ENCODE measurements at regions of chr18 and their contacts with region 1.

Region 1: DNA sequence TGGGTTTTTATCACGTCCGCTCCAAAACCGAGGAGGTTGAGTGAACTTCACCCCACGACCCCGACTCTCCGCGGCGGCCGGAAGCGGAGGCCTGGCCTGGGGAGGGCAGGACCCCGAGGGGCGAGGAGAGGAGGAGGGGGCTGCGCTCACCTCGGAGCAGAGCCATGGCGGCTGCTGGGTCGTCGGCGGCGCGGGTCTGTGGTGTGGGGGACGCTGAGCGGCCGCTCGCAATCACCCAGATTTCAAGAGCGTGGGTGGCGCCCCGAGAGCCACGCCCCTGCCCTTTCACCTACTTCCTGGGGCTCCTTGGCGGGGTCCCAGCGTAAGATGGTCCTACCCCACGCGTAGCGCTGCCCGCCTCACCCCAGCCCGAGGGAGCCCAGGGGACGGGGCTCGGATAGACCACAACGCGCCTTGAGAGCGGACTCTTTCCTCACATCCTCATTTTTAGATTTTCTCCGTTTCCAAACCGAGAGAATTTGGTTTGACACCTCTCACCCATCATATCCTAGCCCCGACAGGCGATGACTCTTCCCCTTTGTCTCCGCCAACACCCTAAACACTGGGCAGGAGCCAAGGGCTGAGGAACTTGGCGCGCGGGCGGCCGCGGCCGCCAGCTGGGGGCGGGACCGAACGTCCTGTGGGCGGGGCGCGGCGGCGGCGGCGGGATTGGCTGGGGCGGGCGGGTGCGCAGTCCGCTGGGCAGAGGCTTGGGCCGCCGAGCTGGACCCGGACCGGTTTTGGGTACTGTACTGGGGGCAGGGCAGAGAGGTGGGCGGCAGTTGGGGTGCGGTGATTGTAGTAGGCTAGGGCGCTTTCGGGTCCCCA is at the start of gene ACAA2:
- DNase-seq: peak in 1 of 2 experiments; percentile 90
- H3K4me3 ChIP-seq: peak within 1 kb of the TSS; percentile 74 to 93 (median 87)
- H3K27ac ChIP-seq: peak within 1 kb of the TSS; percentile 94
- H3K4me1 ChIP-seq: peaks cover 2 to 11% (median 8%) of the 10 kb centered on the region in 4 experiments; a peak in 5 of 7 replicates
- H3K27me3 ChIP-seq: no peaks in the 10 kb centered on the region; a peak in 1 of 7 replicates
- CTCF ChIP-seq: no peak
- EP300 ChIP-seq: no peak
- POLR2A ChIP-seq: peak; percentile 75 to 77
- RAD21 ChIP-seq: no peak
- total RNA-seq, gene ACAA2: 151 and 152 TPM in 2 replicates

Region 2: DNA sequence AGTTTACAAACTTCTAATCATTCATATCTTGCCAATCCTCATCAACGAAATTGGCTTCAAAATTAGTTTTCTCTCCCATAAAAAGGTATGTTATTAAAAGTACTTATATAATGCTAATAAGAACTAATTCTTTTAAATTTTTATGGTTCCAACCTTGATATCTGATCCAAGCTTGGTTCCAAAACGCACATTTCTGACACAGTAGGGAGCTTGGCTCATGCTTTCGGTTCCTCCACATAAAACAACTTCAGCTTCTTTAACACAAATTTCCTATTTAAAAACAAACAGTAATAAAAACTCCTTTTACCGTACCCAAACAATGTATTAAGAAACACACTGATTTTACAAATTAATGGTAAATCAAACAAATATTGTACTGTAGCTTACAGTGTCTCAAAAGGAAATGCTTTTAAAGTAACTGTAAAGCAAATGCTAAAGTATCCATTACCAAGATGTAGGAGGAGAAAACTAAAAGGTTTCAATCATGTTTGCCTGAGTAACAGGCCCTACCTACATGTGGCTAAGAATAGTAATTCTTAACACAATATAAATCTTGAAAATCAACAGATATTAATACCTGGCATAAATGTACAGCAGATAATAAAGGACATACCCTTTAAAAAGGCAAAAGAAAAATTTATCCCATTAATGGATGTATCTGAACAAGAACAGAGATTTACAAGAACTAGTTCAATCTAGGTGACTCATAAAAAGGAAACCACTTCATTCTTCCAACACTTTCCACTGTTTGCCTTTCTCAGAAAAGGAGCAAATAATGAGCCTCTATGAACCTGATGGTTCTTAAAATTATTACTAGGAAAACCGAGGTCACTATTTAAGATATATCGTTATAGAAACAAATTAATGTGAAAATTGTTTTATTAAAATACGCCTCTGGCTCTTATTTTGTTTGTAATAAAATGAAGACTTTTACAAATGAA is 17.7 kb before region 1 on chr18:
- CTCF ChIA-PET with region 1: no interaction called
- POLR2A ChIA-PET with region 1: interaction called, 10 read pairs
- DNase-seq: no peak
- H3K4me3 ChIP-seq: no peak overlapping the region
- H3K27ac ChIP-seq: no peak overlapping the region
- H3K4me1 ChIP-seq: no peaks in the 10 kb centered on the region
- H3K27me3 ChIP-seq: no peaks in the 10 kb centered on the region
- CTCF ChIP-seq: no peak
- EP300 ChIP-seq: no peak
- POLR2A ChIP-seq: no peak
- RAD21 ChIP-seq: no peak

Region 3: GRCh38 chr18:49898421-49898820 is 84.9 kb after region 1 on chr18:
- CTCF ChIA-PET with region 1: no interaction called
- POLR2A ChIA-PET with region 1: no interaction called
- DNase-seq: peak in 1 of 2 experiments; percentile 73
- H3K4me3 ChIP-seq: no peak overlapping the region
- H3K27ac ChIP-seq: no peak overlapping the region
- H3K4me1 ChIP-seq: peaks cover 0 to 4% (median 0%) of the 10 kb centered on the region in 4 experiments; a peak in 1 of 7 replicates
- H3K27me3 ChIP-seq: no peaks in the 10 kb centered on the region
- CTCF ChIP-seq: no peak
- EP300 ChIP-seq: no peak
- POLR2A ChIP-seq: no peak
- RAD21 ChIP-seq: no peak

Measured in H1 (cell line).